Naive thymus-derived CD4-positive, alpha-beta T cell (primary cell): ENCODE measurements at regions of chr10 and their contacts with region 1.

Region 1: GRCh38 chr10:23095404-23095965 is at the start of gene MSRB2:
- DNase-seq: peak; percentile 34 to 70 (median 58)
- ATAC-seq: peak; percentile 83
- H3K4me3 ChIP-seq: peak within 1 kb of the TSS; percentile 66
- H3K4me3 Mint-ChIP-seq: peak within 1 kb of the TSS; percentile 85 to 100 (median 94)
- H3K27ac ChIP-seq: peak within 1 kb of the TSS; percentile 74
- H3K27ac Mint-ChIP-seq: peak within 1 kb of the TSS; percentile 84 to 97 (median 94)
- H3K4me1 ChIP-seq: peaks cover 13 to 20% of the 10 kb centered on the region in 2 donors
- H3K4me1 Mint-ChIP-seq: peaks cover 30 to 45% (median 43%) of the 10 kb centered on the region in 7 donors
- H3K27me3 ChIP-seq: no peaks in the 10 kb centered on the region
- H3K27me3 Mint-ChIP-seq: peaks cover 0 to 22% (median 0%) of the 10 kb centered on the region in 5 donors
- total RNA-seq, gene MSRB2: 4.7 to 11.9 (median 9.0) TPM

Region 2: GRCh38 chr10:22003079-22003913 is 1092.2 kb before region 1 on chr10 and contains the start of gene DNAJC1:
- CTCF ChIA-PET with region 1: no interaction called
- POLR2A ChIA-PET with region 1: no interaction called
- intact Hi-C with region 1: loop called (anchors 1 kb)
- DNase-seq: peak; percentile 94 to 99 (median 97)
- ATAC-seq: peak; percentile 97
- H3K4me3 ChIP-seq: peak within 1 kb of the TSS; percentile 87
- H3K4me3 Mint-ChIP-seq: peak within 1 kb of the TSS; percentile 81 to 99 (median 94)
- H3K27ac ChIP-seq: peak within 1 kb of the TSS; percentile 82
- H3K27ac Mint-ChIP-seq: peak within 1 kb of the TSS; percentile 78 to 94 (median 92)
- H3K4me1 ChIP-seq: peaks cover 18 to 19% of the 10 kb centered on the region in 2 donors
- H3K4me1 Mint-ChIP-seq: peaks cover 7 to 42% (median 29%) of the 10 kb centered on the region in 7 donors
- H3K27me3 ChIP-seq: no peaks in the 10 kb centered on the region
- H3K27me3 Mint-ChIP-seq: peaks cover 0 to 15% (median 4%) of the 10 kb centered on the region in 5 donors
- total RNA-seq, gene DNAJC1: 11.0 to 23.9 (median 12.1) TPM

Region 3: DNA sequence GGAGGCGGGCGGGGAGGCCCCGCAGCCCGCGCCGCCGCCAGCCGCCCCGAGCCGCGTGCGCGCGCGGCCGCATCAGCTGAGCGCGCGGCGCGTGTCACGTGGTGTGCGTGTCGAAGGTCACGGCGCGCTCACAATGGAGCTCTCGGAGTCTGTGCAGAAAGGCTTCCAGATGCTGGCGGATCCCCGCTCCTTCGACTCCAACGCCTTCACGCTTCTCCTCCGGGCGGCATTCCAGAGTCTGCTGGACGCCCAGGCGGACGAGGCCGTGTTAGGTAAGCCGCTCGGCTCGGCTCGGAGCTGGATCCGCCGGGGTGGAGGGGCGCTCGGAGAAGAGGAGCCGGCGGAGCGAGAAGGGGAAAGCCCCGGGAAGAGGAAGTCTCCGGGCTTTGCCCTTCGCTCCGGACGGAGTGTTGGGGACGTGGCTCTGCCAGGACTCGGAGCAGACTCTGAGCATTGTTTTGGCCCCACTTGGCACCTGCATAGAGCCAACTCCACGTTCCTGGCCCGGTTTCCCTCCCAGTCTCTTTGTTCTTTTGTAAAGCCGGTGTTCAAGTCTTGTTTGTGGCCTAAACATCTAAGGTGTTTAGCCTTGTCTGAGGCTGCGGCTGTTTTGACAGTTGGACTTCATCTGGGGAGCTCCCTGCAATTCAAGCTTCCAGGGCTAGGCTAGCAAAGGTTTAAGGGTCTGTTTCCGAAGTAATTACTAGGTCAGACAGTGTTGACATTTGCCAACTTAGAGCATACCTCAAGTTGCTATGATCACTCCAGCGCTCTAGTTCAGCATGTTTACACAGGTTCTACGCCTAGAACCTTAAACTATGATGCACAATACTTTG is 779.0 kb before region 1 on chr10 and contains the start of gene COMMD3:
- CTCF ChIA-PET with region 1: no interaction called
- POLR2A ChIA-PET with region 1: no interaction called
- intact Hi-C with region 1: loop called in 1 of 2 experiments (anchors 5 kb)
- DNase-seq: peak; percentile 71 to 85 (median 80)
- ATAC-seq: peak; percentile 84
- H3K4me3 ChIP-seq: peak within 1 kb of the TSS; percentile 73
- H3K4me3 Mint-ChIP-seq: peak within 1 kb of the TSS; percentile 85 to 99 (median 96)
- H3K27ac ChIP-seq: peak within 1 kb of the TSS; percentile 80
- H3K27ac Mint-ChIP-seq: peak within 1 kb of the TSS; percentile 87 to 99 (median 96)
- H3K4me1 ChIP-seq: peaks cover 16 to 25% of the 10 kb centered on the region in 2 donors
- H3K4me1 Mint-ChIP-seq: peaks cover 11 to 53% (median 46%) of the 10 kb centered on the region in 7 donors
- H3K27me3 ChIP-seq: peaks cover 0 to 13% of the 10 kb centered on the region in 2 donors
- H3K27me3 Mint-ChIP-seq: peaks cover 0 to 18% (median 14%) of the 10 kb centered on the region in 5 donors
- total RNA-seq, gene COMMD3: 33.9 to 83.7 (median 51.2) TPM

Region 4: DNA sequence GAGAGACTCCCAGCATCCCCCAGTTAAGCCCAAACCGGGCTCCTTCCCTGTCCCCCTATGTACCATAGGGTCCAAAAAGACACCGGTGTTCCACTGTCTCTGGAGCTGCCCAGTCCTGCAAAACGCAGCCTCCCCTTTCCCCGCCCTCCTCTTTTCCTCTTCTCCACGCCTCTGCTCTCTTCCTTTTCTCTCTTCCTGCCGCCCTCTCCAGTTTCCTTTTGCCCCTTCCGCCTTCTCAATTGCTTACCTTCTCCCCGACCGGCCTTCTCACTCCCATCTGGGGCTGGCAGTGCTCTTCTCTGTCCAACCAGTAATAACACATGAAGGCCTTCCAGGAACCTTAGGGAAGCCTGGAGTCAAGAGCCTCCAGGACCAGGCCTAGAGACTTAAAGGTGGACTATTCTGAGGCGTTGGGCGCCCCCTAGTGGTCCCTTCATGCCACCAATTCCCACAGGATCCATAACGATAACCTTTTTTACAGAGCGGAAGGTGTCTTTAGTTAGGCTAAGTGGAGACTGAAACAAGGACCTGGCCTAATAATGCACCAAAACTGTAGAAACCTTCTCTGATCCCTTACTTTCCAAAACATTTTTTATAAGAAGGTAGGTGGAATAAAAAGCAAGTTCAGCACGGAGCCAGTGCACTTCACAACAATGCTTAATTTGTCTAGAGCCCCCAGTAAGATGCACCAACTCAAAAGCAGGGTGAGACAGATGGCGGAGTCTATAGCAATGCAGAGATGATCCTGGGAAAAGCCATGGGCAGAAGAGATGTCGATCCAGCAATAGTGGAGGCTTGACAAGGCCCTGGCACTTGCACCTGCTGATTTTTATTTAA is 27.3 kb before region 1 on chr10:
- CTCF ChIA-PET with region 1: no interaction called
- POLR2A ChIA-PET with region 1: no interaction called
- intact Hi-C with region 1: loop called in 1 of 2 experiments (anchors 1 kb)
- DNase-seq: peak; percentile 23 to 66 (median 48)
- ATAC-seq: peak; percentile 78
- H3K4me3 ChIP-seq: no peak overlapping the region
- H3K4me3 Mint-ChIP-seq: no peak overlapping the region
- H3K27ac ChIP-seq: no peak overlapping the region
- H3K27ac Mint-ChIP-seq: no peak overlapping the region
- H3K4me1 ChIP-seq: no peaks in the 10 kb centered on the region
- H3K4me1 Mint-ChIP-seq: peaks cover 0 to 2% (median 0%) of the 10 kb centered on the region in 7 donors
- H3K27me3 ChIP-seq: no peaks in the 10 kb centered on the region
- H3K27me3 Mint-ChIP-seq: peaks cover 0 to 6% (median 2%) of the 10 kb centered on the region in 5 donors

Region 5: GRCh38 chr10:23362879-23363792 is 267.7 kb after region 1 on chr10:
- CTCF ChIA-PET with region 1: no interaction called
- POLR2A ChIA-PET with region 1: no interaction called
- intact Hi-C with region 1: loop called in 1 of 2 experiments (anchors 5 kb)
- DNase-seq: peak in 8 of 9 donors; percentile 51 to 77 (median 68)
- ATAC-seq: peak; percentile 90
- H3K4me3 ChIP-seq: peak overlapping the region; percentile 22
- H3K4me3 Mint-ChIP-seq: peak overlapping the region; percentile 60 to 90 (median 78)
- H3K27ac ChIP-seq: peak overlapping the region; percentile 68
- H3K27ac Mint-ChIP-seq: peak overlapping the region; percentile 78 to 98 (median 92)
- H3K4me1 ChIP-seq: peaks cover 30 to 33% of the 10 kb centered on the region in 2 donors
- H3K4me1 Mint-ChIP-seq: peaks cover 34 to 61% (median 49%) of the 10 kb centered on the region in 7 donors
- H3K27me3 ChIP-seq: no peaks in the 10 kb centered on the region
- H3K27me3 Mint-ChIP-seq: no peaks in the 10 kb centered on the region

Region 6: GRCh38 chr10:24465891-24466818 is 1370.7 kb after region 1 on chr10:
- CTCF ChIA-PET with region 1: no interaction called
- POLR2A ChIA-PET with region 1: no interaction called
- intact Hi-C with region 1: loop called in 1 of 2 experiments (anchors 10 kb)
- DNase-seq: peak in 1 of 9 donors; percentile 69
- ATAC-seq: peak; percentile 42
- H3K4me3 ChIP-seq: no peak overlapping the region
- H3K4me3 Mint-ChIP-seq: peak overlapping the region in 1 of 10 donors; percentile 66
- H3K27ac ChIP-seq: no peak overlapping the region
- H3K27ac Mint-ChIP-seq: peak overlapping the region in 1 of 9 donors; percentile 83
- H3K4me1 ChIP-seq: no peaks in the 10 kb centered on the region
- H3K4me1 Mint-ChIP-seq: peaks cover 4 to 49% (median 14%) of the 10 kb centered on the region in 7 donors
- H3K27me3 ChIP-seq: no peaks in the 10 kb centered on the region
- H3K27me3 Mint-ChIP-seq: peaks cover 0 to 10% (median 8%) of the 10 kb centered on the region in 5 donors